ENCODE measurements at regions of chr11 and their contacts with region 1.

Region 1: GRCh38 chr11:10808553-10809372 is at the start of gene EIF4G2:
- DNase-seq: peak; percentile 99
- CTCF ChIP-seq: no peak

Region 2: GRCh38 chr11:9320047-9320446 is 1488.7 kb before region 1 on chr11:
- CTCF ChIA-PET with region 1: no interaction called
- POLR2A ChIA-PET with region 1: interaction called, 11 read pairs
- DNase-seq: no peak
- CTCF ChIP-seq: no peak

Region 3: DNA sequence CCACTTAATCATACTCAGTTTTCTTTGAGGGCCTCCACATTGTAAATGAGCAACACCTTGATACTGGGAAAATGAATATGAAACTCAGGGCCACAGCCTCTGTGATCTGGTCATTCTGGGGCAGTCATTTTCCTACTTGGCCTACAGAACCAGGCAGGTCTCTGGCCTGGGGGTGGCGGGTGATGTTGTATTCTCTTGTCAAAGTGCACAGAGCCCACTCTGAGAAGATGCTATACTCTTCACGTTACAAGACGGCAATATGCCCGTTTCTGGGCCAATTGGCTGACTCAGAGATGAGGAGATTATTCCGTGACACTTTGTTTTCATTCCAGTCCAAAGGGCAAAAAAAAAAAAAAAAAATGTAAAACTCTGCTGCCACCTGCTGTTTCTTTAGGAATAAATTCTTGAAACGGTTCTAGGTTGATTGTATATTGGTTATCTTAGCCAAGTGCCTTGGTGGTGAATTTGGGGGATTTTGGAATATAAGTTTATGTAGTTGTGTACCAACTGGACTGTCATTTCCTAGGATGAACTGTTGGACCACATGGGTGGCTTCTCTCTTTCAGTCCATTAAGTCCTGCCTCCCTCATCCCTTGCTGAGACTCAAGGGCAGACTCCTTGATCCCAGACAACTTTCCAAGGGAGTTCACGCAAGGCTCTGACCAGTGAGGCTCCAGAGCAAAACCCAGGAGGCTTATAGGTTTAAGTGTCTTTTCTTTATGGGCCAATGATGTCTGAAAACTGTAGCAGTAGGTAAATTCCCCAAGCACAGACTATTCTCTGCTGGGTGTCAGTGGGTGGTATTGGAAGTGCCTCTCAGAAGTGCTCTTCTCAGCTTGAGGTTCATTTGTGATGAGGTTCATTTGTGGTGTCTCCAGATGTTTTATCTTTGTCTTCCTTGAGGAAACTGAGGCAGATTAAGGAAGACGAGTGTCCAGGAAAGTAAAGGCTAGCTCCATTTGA is 485.7 kb before region 1 on chr11:
- CTCF ChIA-PET with region 1: no interaction called
- POLR2A ChIA-PET with region 1: no interaction called
- DNase-seq: peak; percentile 51
- CTCF ChIP-seq: peak; percentile 27

Region 4: GRCh38 chr11:10797531-10797930 is 11.2 kb before region 1 on chr11:
- CTCF ChIA-PET with region 1: interaction called, 81 read pairs
- POLR2A ChIA-PET with region 1: interaction called, 79 read pairs
- DNase-seq: no peak
- CTCF ChIP-seq: no peak

Region 5: DNA sequence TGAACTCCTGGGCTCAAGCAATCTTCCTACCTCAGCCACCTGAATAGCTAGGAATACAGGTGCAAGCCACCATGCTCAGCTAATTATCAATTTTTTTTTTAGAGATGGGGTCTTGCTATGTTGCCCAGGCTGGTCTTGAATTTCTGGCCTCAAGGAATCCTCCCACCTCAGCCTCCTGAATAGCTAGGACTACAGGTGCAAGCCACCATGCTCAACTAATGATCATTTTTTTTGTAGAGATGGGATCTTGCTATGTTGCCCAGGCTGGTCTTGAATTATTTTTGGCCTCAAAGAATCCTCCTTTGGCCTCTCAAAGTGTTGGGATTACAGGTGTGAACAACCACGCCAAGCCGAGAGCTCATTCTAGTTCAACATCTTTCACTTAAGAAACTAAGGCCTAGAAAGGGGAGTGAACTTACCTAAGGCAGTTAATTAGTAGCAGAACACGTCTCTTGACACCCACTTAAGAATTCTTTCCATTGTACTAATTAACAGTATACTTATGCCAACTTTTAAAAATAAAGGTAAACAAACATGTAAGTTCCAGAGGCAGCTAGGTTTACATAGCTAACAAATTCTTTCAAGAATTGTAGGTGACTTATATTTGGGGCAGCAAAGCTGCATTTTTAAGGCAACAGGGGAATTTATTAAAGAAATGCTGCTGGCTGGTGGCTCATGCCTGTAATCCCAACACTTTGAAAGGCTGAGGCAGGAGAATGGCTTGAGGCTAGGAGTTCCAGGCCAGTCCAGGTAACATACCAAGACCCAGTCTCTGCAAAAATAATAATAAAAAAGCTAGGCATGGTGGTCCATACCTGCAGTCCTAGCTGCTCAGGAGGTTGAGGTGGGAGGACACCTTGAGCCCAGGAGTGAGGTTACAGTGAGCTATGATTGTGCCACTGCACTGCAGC is 39.5 kb after region 1 on chr11:
- CTCF ChIA-PET with region 1: interaction called, 6 read pairs
- POLR2A ChIA-PET with region 1: interaction called, 11 read pairs
- DNase-seq: no peak
- CTCF ChIP-seq: no peak

Region 6: DNA sequence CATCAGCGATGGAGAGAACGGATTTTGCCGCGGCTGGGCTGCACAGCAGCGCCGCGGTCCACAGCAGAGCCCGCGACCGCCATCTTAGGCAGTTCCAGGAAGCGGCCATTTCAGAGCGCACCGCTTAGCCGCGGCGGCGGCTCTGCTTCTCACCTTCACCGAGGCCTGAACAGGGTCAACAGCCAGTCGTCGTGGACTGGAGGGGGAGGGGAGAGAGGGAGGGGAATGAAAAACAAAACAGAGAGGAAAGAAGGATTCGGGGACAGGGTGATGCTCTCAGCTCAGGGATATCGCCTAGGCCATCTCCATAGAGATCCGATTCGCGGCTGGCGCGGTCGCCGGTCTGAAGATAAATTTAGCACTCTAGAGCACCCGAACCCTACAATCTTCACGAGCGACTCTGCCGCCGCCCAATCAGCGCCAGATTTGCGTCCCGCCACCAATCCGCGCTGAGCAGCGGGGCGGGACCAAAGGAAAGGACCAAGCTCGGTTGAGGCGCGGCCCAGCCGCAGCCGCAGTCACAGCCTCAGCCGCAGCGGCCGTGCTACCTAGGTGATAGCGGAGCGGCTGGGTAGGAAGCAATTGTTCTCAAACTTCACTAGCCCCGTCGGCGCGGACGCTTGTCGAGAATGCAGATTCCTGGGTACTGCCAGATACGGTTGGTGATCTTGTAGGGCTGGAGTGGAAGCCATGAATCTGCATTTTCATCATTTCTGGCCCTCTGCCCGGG is 49.1 kb after region 1 on chr11 and contains the start of gene ZBED5:
- CTCF ChIA-PET with region 1: interaction called, 6 read pairs
- POLR2A ChIA-PET with region 1: interaction called, 58 read pairs
- DNase-seq: peak; percentile 94
- CTCF ChIP-seq: peak; percentile 26

Region 7: GRCh38 chr11:11036185-11036847 is 227.6 kb after region 1 on chr11:
- CTCF ChIA-PET with region 1: no interaction called
- POLR2A ChIA-PET with region 1: no interaction called
- DNase-seq: no peak
- CTCF ChIP-seq: no peak